Adrenal gland (tissue), 19 donors: ENCODE measurements at regions of chr19 and their contacts with region 1.

Region 1: GRCh38 chr19:47813304-47814004 is 8.3 kb upstream of the CRX start:
- DNase-seq: peak; percentile 64 to 80 (median 73)
- H3K4me3 ChIP-seq: no peak overlapping the region
- H3K27ac ChIP-seq: no peak overlapping the region
- H3K4me1 ChIP-seq: no peaks in the 10 kb centered on the region
- H3K27me3 ChIP-seq: no peaks in the 10 kb centered on the region
- CTCF ChIP-seq: peak; percentile 10 to 60 (median 46)
- POLR2A ChIP-seq: no peak

Region 2: GRCh38 chr19:47719047-47719859 is 94.2 kb before region 1 on chr19:
- intact Hi-C with region 1: no loop called
- DNase-seq: peak; percentile 86 to 94 (median 93)
- H3K4me3 ChIP-seq: peak overlapping the region in 1 of 4 donors; percentile 38
- H3K27ac ChIP-seq: peak overlapping the region; percentile 40 to 95 (median 89)
- H3K4me1 ChIP-seq: peaks cover 41 to 44% of the 10 kb centered on the region in 2 donors
- H3K27me3 ChIP-seq: no peaks in the 10 kb centered on the region
- CTCF ChIP-seq: no peak
- POLR2A ChIP-seq: peak in 1 of 2 donors; percentile 66

Region 3: GRCh38 chr19:47863514-47863936 is 50.1 kb after region 1 on chr19:
- intact Hi-C with region 1: loop called in 1 of 2 experiments (anchors 2 kb)
- DNase-seq: peak; percentile 82 to 93 (median 89)
- H3K4me3 ChIP-seq: no peak overlapping the region
- H3K27ac ChIP-seq: peak overlapping the region in 2 of 5 donors; percentile 0 to 22
- H3K4me1 ChIP-seq: no peaks in the 10 kb centered on the region
- H3K27me3 ChIP-seq: no peaks in the 10 kb centered on the region
- CTCF ChIP-seq: peak; percentile 80 to 96 (median 86)
- POLR2A ChIP-seq: no peak